Lower lobe of right lung (tissue), 2 donors: ENCODE measurements at regions of chr2 and their contacts with region 1.

Region 1: GRCh38 chr2:207473049-207473930 is 56.5 kb upstream of the CREB1 start:
- DNase-seq: no peak
- ATAC-seq: peak; percentile 63 to 83
- H3K4me3 ChIP-seq: peak overlapping the region; percentile 12
- H3K27ac ChIP-seq: no peak overlapping the region
- H3K4me1 ChIP-seq: peaks cover 25% of the 10 kb centered on the region
- H3K27me3 ChIP-seq: no peaks in the 10 kb centered on the region
- CTCF ChIP-seq: peak; percentile 64

Region 2: DNA sequence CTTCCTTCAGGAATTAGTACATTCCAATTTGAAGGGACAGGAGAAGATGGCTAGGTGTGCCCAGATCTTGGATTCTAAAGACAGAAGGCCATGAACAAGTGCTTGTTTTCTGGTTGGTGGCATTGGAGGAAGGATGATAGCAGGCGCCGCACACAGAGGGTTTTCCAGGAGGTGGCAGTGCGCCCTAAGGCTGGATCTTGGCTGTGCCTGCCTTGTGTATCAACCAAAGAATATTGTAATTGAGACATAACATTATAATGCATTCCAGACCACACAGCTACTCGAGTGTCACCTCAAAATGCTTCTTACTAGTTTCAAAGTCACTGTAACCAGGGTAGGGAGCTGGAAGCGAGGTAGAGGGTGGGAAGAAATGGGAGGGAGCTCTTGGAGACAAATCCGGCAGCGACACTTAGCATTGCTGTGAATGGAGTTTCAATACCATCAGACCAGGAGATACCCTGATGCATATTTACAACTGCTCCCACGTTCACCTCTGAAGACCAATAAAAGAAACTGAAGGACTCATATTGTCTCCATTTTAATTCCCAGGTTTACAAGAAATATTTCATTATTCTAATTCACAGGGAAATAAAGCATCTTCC is 491.4 kb before region 1 on chr2:
- intact Hi-C with region 1: loop called (anchors 5 kb)
- DNase-seq: peak; percentile 72
- ATAC-seq: peak; percentile 85 to 94
- H3K4me3 ChIP-seq: no peak overlapping the region
- H3K27ac ChIP-seq: no peak overlapping the region
- H3K4me1 ChIP-seq: peaks cover 22% of the 10 kb centered on the region
- H3K27me3 ChIP-seq: no peaks in the 10 kb centered on the region
- CTCF ChIP-seq: peak; percentile 77